GM10248 (cell line): ENCODE measurements at regions of chr17 and their contacts with region 1.

Region 1: GRCh38 chr17:64129764-64130558 is at the start of gene ERN1:
- DNase-seq: peak; percentile 94
- CTCF ChIP-seq: no peak

Region 2: DNA sequence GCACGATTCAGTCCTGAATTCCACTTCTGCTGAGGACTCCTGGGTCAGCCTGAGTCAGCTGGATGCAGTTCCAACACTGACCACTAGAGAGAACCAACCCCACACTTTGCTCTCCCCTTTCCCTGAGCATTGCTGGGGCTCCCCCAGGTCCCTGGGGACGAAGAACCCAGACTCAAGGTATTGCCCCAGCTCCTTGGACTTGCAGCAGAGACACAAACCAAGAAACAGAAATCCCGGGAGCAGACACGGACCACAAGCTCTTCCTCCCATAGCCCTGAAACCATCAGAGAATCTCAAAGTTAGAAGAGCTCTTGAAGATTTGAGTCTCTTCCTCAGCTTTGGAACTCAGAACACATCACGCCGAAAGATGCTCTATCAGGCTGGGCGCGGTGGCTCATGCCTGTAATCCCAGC is 210.6 kb before region 1 on chr17:
- CTCF ChIA-PET with region 1: interaction called, 51 read pairs
- POLR2A ChIA-PET with region 1: no interaction called
- DNase-seq: peak; percentile 85
- CTCF ChIP-seq: peak; percentile 89

Region 3: GRCh38 chr17:64020056-64020766 is 109.8 kb before region 1 on chr17 and contains the start of gene ICAM2:
- CTCF ChIA-PET with region 1: interaction called, 515 read pairs
- POLR2A ChIA-PET with region 1: interaction called, 10 read pairs
- DNase-seq: peak; percentile 70
- CTCF ChIP-seq: no peak

Region 4: GRCh38 chr17:64056269-64057005 is 73.5 kb before region 1 on chr17:
- CTCF ChIA-PET with region 1: interaction called, 115 read pairs
- POLR2A ChIA-PET with region 1: interaction called, 4 read pairs
- DNase-seq: peak; percentile 84
- CTCF ChIP-seq: peak; percentile 20

Region 5: DNA sequence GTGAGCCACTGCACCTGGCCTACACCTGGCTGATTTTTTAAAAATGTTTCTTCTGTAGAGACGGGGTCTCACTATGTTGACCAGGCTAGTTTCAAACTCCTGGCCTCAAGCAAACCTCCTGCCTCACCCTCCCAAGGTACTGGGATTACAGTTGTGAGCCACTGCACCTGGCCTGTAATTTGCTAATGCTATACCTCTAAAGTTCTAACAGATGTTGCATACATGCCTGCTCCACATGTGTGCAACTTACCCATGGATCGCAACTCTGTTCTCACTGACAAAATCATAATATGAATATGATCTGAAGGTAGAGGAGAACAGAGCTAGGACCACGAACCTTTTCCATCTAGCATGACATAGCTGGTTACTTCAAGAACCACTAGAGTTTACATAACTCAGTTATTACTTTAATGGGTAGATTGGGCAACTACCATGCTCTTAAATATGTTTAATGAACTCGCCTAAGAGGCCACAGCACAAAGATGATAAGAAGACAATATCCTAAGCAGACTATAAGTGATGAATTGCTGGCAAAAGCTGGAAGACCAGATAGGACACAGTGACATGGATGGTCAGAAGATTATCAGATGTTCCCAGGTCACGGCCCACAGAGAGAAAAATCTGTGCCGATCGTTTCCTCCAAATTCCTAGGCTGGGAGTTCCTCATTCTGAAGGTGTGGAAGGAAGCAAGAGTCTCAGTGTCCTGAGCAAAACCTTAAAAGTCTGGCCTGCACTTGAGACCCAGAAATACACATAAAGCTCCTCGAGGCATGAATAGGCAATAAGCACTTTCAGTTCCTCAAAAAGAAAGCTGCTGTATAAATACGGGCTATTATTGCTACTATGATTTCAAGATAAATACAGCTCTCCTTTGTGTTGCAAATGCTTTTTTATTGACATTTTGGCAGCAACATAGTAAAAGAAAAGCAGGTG is 55.9 kb before region 1 on chr17:
- CTCF ChIA-PET with region 1: interaction called, 29 read pairs
- POLR2A ChIA-PET with region 1: interaction called, 5 read pairs
- DNase-seq: peak; percentile 71
- CTCF ChIP-seq: no peak

Region 6: DNA sequence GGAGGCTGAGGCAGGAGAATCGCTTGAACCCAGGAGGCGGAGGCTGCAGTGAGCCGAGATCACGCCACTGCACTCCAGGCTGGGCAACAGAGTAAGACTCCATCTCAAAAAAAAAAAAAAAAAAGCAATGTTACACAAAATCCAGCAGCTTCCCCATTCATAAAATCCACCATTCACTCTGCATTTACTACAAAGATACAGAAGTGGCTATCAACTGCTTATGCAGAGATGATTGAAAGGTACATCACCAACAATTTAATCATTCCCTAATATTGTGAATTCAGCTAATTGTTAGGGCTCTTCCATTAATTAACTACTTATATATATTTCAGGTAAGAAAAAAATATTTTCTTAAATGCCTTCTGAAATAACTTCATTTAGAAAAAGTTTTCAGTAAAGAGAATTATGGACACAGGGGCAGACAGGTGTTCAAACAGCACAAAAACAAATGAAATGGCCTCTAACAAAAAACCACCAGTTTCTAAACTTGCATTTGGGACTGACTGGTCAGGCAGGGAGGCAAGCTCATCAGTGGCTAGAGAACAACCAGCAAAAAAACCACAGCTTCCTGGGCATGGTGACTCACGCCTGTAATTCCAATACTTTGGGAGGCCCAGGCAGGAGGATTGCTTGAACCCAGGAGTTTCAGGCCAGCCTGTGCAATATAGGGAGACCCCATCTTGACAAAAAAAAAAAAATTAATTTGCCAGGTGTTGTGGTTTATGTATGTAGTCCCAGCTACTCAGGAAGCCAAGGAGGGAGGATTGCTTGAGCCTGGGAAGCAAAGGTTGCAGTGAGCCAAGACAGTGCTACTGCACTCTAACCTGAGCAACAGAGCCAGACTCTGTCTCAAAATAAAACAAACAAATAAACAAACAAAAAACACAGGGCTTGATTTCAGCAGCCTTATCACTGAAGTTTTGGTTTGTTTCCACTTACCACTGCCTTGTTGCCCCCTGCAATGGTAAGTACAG is 26.3 kb before region 1 on chr17:
- CTCF ChIA-PET with region 1: interaction called, 14 read pairs
- POLR2A ChIA-PET with region 1: interaction called, 3 read pairs
- DNase-seq: no peak
- CTCF ChIP-seq: no peak

Region 7: DNA sequence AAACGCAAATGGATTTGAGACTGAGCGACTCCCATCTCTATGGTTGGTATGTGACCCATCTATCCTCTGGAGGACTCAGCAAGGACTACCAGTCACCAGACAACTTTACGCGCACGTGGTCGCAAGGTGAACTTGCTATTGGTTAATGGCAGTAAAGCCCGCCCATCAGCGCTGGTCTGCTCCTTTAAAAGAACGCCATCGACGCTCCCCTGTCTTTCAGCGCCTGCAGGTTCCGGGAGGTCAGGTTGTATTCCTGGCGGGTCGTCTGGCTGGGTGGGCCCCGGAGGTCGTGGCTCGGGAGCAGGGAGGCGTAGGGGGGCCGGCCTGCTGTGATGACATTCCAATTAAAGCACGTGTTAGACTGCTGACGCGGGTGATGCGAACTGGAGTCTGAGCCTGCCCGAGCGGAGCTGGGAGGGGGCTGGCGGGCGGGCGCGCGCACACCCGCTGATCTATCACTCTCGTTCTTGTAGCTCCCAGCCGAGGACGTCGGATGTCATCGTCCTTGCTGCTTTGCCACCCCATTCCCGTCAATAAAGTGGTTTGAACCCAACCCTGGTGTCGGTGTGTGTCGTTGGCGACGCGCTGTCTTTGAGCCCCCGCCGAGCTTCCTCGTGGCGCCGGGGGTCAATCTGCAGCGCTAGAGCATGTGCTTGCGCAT is 15.9 kb after region 1 on chr17:
- CTCF ChIA-PET with region 1: interaction called, 65 read pairs
- POLR2A ChIA-PET with region 1: interaction called, 45 read pairs
- DNase-seq: peak; percentile 97
- CTCF ChIP-seq: no peak

Region 8: GRCh38 chr17:64256913-64257807 is 127.2 kb after region 1 on chr17:
- CTCF ChIA-PET with region 1: no interaction called
- POLR2A ChIA-PET with region 1: no interaction called
- DNase-seq: no peak
- CTCF ChIP-seq: no peak